Activated CD8-positive, alpha-beta T cell treated with anti-CD3 and anti-CD28 coated beads for 36 hours (primary cell): ENCODE measurements at regions of chr6 and their contacts with region 1.

Region 1: DNA sequence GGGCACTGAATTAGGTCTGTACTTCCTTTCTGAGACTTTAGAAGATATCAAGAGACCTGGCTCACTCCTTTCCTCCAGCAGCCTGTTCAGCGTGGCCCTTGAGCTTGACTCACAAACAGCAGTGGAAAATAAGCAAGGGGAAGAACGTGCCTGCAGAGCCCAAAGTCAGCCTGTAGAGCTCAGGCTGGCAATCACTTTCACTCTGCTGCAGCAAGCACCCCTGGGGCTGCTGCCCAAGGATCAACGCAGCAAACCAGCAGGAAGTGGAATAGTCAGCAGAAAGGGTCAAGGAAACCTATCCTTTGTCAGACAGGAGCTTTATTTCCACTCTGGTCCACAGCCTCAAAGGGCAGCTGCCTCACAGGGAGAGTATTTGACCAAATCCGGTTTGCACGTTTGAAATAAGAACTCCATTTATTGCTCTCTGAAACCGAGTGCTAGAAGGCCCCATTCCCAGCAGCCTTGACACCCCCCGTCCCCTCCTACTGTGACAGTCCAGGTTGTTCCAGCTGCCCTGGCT is 77.4 kb downstream of the PRDM1 start:
- DNase-seq: peak; percentile 83
- ATAC-seq: peak; percentile 65
- H3K4me3 Mint-ChIP-seq: peak overlapping the region; percentile 58
- H3K27ac Mint-ChIP-seq: peak overlapping the region; percentile 95
- H3K4me1 Mint-ChIP-seq: peaks cover 51% of the 10 kb centered on the region
- H3K27me3 Mint-ChIP-seq: no peaks in the 10 kb centered on the region
- CTCF ChIP-seq: no peak

Region 2: DNA sequence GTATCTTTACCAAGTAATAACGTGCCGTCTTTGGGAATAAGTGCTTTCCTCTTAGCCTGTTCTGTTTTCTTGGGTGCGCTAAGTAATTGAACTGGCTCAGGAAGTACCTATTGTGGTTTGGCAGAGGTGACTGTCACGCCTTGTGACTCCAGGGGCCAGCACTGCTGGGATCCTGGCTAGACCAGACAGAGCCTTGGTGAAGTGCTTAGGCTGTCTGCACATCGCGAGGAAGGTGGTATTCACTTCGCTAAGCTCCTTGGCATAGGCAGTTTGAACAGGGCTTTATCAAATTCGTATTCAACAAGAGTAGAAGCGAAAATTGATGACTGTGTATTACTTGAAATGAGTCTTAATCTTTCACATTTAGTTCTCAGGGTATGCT is 59.8 kb before region 1 on chr6:
- CTCF ChIA-PET with region 1: no interaction called
- POLR2A ChIA-PET with region 1: interaction called, 25 read pairs
- intact Hi-C with region 1: loop called (anchors 1 kb)
- DNase-seq: peak; percentile 53
- ATAC-seq: peak; percentile 38
- H3K4me3 Mint-ChIP-seq: peak overlapping the region; percentile 78
- H3K27ac Mint-ChIP-seq: peak overlapping the region; percentile 96
- H3K4me1 Mint-ChIP-seq: peaks cover 79% of the 10 kb centered on the region
- H3K27me3 Mint-ChIP-seq: peaks cover 10% of the 10 kb centered on the region
- CTCF ChIP-seq: no peak

Region 3: DNA sequence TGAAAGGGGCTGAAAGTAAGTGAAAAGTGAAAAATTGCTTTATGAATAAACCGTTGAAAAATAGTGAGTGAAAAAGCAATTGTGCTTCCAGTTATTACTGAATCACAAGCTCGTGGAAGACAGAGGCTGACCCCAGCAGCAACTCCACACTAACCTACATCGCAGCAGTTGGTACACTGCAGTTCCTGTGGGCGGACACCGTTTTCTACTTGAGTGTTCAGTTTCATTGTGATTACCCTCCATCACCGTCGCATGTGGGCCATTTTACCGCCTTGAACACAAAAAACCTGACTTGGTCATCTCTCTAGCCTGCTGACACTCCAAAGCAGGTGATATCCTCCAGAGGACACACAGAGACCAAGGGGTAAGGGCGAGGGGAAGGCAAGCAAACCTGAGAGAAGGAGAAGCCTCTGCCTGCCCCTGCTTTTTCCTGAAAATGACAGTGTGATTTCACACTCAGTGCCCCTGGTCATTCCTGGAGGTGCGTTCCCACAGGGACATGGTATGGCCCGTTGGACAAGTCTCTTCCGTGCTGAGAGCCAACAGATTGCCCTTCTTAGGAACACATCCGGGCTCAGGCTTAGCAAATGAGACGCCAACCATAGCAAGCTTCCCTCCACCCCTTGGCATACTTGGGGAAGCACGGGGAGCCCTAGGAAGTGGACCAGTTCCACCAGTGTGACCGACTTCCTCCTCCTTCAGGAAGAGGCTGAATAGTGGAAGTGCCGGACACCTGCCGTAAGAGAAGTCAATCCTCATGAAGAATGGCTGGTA is 48.8 kb before region 1 on chr6:
- CTCF ChIA-PET with region 1: interaction called, 8 read pairs
- POLR2A ChIA-PET with region 1: interaction called, 12 read pairs
- intact Hi-C with region 1: no loop called
- DNase-seq: peak; percentile 93
- ATAC-seq: peak; percentile 74
- H3K4me3 Mint-ChIP-seq: peak overlapping the region; percentile 46
- H3K27ac Mint-ChIP-seq: peak overlapping the region; percentile 71
- H3K4me1 Mint-ChIP-seq: peaks cover 89% of the 10 kb centered on the region
- H3K27me3 Mint-ChIP-seq: peaks cover 18% of the 10 kb centered on the region
- CTCF ChIP-seq: no peak

Region 4: DNA sequence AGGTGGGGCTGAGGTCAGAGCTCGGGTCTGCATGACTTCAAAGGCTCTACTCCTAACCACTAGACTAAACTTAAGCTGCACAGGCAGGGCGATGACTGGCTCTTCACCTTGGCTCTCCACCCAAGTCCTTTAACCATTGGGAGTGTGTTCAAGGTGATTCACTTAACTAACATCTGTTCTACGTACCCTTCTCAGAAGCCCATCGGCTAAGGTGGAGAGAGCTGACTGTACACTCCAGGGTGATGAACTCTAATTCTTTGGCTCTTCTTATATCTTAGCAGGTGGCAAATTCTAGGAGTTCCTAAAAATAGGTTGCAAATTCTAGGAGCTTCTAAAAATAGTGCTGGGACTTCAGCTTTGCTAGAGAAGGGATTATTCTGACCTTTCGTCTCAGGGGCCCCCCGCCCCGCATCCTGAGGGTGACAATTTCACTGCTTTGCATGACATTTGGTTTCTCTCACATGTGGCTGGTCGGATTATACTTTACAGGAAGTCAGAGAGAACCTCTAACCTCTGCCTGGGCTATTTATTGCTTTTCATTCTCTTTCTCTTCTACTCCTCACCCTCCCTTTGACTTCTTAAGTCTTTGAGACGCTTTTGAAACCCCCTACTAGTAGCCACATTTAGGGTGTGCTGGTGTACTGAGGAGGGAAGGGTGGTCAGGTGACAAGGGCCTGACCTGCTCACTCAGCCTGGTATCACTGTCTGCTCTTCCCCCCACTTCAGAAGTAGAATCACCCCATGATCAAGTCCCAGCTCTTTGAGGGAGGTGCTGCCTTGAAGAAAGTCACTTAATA is 21.9 kb before region 1 on chr6:
- CTCF ChIA-PET with region 1: interaction called, 11 read pairs
- POLR2A ChIA-PET with region 1: interaction called, 28 read pairs
- intact Hi-C with region 1: no loop called
- DNase-seq: peak; percentile 96
- ATAC-seq: peak; percentile 89
- H3K4me3 Mint-ChIP-seq: peak overlapping the region; percentile 20
- H3K27ac Mint-ChIP-seq: peak overlapping the region; percentile 96
- H3K4me1 Mint-ChIP-seq: peaks cover 64% of the 10 kb centered on the region
- H3K27me3 Mint-ChIP-seq: peaks cover 2% of the 10 kb centered on the region
- CTCF ChIP-seq: no peak

Region 5: GRCh38 chr6:106181664-106182418 is 18.3 kb after region 1 on chr6:
- CTCF ChIA-PET with region 1: interaction called, 13 read pairs
- POLR2A ChIA-PET with region 1: interaction called, 16 read pairs
- intact Hi-C with region 1: loop called (anchors 2 kb)
- DNase-seq: no peak
- ATAC-seq: peak; percentile 40
- H3K4me3 Mint-ChIP-seq: no peak overlapping the region
- H3K27ac Mint-ChIP-seq: peak overlapping the region; percentile 8
- H3K4me1 Mint-ChIP-seq: peaks cover 53% of the 10 kb centered on the region
- H3K27me3 Mint-ChIP-seq: peaks cover 2% of the 10 kb centered on the region
- CTCF ChIP-seq: no peak

Region 6: GRCh38 chr6:106187424-106187982 is 24.0 kb after region 1 on chr6:
- CTCF ChIA-PET with region 1: interaction called, 13 read pairs
- POLR2A ChIA-PET with region 1: interaction called, 16 read pairs
- intact Hi-C with region 1: loop called (anchors 2 kb)
- DNase-seq: no peak
- ATAC-seq: peak; percentile 32
- H3K4me3 Mint-ChIP-seq: peak overlapping the region; percentile 18
- H3K27ac Mint-ChIP-seq: peak overlapping the region; percentile 91
- H3K4me1 Mint-ChIP-seq: peaks cover 63% of the 10 kb centered on the region
- H3K27me3 Mint-ChIP-seq: no peaks in the 10 kb centered on the region
- CTCF ChIP-seq: no peak